Left cardiac atrium (tissue), 4 donors: ENCODE measurements at regions of chr12 and their contacts with region 1.

Region 1: DNA sequence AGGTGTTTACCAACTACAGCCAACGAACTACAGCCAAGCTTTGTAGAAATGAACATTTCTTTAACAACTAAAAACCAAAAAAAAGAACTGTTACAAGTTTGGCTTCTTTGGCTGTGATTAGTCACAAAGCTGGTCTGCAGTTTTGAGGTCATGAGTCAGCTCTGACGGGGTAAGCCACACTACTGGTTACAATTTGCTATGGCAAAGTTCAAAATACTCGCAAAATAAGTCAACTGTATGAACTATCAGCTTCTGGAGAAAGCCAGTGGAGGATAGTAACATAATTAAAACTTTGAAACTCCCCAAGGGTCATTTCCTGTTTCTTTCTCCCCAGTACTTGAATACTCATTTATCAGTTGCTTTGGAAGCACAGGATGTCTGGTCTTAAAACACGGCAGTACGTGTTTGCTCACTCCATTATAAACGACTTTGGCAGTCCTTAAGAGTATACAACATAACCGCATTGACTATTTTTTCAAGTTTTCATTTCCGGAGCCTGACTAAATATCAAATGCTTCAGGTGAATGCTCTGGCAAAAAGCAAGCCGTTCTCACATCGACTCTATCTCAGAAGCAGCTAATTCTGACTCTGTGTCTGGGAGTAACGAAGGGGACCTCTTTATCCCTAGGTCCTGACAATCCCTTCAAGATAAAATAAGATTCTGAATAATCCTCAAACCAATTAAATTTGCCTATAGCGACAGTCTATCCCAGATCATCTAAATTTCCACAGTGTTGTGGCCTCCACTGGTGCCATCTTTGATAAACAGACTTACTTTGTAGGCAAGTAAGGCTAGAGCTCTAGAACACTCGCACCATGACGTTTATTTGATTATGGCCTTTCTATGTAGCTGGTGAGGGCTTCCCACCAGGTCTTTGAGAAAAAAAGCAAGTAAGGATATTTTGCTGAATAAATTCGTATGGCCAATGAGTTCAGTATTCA is 10.6 kb downstream of the PHLDA1 start:
- DNase-seq: no peak
- ATAC-seq: peak; percentile 51 to 85

Region 2: DNA sequence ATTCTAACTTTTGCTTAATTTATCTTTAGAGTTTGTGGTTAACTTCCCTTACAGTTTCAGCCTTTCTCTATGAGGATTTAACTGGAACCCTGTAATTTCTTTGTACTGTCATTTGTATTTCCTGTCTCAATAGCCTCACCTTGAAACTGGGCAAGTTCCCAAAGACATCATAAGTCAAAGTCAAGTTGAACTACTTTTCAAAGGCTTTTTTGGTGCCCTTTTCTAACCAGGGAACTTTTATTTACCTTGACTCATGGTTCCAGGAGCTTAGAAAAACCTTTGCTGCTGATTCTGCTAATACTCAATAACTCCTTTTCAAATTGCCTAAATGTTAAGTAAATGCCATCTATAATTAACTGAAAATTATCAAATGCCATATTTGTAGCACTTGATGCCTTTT is 308.8 kb before region 1 on chr12:
- intact Hi-C with region 1: loop called in 1 of 2 experiments (anchors 10 kb)
- DNase-seq: no peak
- ATAC-seq: no peak

Region 3: GRCh38 chr12:75820848-75821578 is 200.0 kb before region 1 on chr12:
- intact Hi-C with region 1: loop called in 1 of 2 experiments (anchors 2 kb)
- DNase-seq: peak; percentile 36
- ATAC-seq: peak; percentile 67 to 70

Region 4: GRCh38 chr12:75933101-75933500 is 87.9 kb before region 1 on chr12:
- intact Hi-C with region 1: loop called in 1 of 2 experiments (anchors 10 kb)
- DNase-seq: no peak
- ATAC-seq: peak in 1 of 2 donors; percentile 31

Region 5: GRCh38 chr12:75977952-75978671 is 42.9 kb before region 1 on chr12:
- intact Hi-C with region 1: loop called in 1 of 2 experiments (anchors 5 kb)
- DNase-seq: peak; percentile 70
- ATAC-seq: peak; percentile 95 to 99